Psoas muscle (tissue), 8 donors: ENCODE measurements at regions of chr1 and their contacts with region 1.

Region 1: DNA sequence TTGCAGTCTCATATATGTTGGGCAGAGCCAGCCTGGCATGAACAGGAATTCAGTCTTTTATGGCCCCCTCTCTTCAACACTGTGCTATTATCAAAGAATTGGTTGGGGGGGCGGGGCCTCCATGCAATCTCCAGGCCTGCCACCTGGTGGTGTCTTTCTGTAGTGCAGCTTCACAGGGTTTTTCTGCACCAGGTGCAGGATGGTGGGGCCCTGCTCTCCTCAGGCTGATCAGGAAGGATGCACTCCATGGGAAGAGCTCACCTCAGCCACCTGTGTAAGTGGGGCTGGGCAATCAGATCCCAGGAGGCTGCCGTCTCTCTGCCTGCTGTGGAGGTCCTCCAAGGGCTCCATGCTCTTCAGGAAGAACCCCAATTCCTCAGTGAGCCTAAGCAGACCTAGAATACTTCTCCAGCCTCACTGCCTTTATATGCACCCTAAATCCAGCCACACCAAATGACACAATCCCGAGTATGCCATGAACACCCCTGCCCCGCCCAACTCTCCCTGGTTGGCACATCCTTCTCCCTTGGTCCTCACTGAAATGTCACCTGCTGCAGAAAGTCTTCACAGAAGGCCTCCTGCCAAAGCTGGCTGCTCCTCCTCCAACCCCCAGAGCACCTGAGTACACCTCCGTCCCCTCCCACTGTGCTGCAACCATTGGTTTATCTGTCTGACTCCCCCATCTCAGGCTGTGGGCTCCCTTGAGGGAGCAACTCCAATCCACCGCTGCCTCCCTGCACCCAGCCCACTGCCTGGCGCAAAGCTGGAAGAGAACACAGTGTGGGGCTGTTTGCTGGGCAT is 16.5 kb downstream of the STK40 start:
- DNase-seq: peak; percentile 70 to 80
- ATAC-seq: peak; percentile 40 to 58 (median 42)
- H3K4me3 ChIP-seq: no peak overlapping the region
- H3K27ac ChIP-seq: peak overlapping the region; percentile 46
- H3K4me1 ChIP-seq: peaks cover 78% of the 10 kb centered on the region
- H3K27me3 ChIP-seq: no peaks in the 10 kb centered on the region
- CTCF ChIP-seq: peak; percentile 98

Region 2: GRCh38 chr1:36300526-36300925 is 68.7 kb before region 1 on chr1:
- intact Hi-C with region 1: loop called in 1 of 2 experiments (anchors 5 kb)
- DNase-seq: no peak
- ATAC-seq: peak in 3 of 4 donors; percentile 8 to 35 (median 18)
- H3K4me3 ChIP-seq: no peak overlapping the region
- H3K27ac ChIP-seq: peak overlapping the region; percentile 76
- H3K4me1 ChIP-seq: peaks cover 11% of the 10 kb centered on the region
- H3K27me3 ChIP-seq: no peaks in the 10 kb centered on the region
- CTCF ChIP-seq: no peak